GM23248 (cell line): ENCODE measurements at regions of chr16 and their contacts with region 1.

Region 1: DNA sequence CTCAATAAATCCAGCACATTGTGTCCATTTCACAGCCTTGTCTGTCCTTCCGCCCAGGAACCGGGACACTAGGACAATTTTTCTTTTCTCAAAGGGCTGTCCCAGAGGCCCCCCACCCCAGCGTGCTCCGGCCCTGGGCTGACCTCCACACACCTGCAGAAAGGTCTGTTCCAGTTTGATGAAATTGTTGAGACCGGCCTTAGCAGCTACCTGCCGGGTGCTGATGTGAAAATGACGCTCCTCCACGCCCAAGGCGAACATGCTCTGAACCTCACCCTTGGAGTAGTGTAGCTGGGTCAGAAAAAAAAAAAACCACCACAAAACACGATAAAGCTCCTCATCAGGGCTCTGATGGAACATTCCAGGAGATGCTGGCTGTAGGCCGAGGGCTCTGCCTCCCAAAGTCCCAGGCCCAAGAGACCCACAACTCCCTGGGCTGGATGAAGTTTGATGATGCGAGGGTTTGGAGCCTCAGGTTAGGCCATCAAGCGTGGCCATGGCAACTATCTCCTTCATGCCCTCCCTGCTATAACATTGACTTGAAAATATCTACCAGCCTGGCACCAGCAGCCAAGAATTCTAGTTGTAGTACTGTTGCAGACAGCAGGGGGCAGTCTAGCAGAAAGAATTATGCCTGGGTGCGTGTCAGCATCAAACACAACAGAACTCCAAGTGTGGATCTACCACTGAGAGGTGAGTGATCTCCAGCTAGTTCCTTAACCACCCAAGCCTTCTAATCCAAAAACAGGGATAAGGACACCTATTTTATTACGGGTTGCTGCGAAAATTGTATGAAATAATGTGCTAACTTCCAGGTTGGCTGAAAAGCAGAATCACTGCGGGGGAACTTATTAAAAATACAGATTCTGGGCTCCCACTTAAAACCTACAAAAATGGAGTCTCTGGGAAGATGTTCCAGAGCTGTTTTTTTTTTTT is 62.1 kb downstream of the RMI2 start:
- DNase-seq: peak; percentile 85
- H3K4me3 ChIP-seq: no peak overlapping the region
- H3K27ac ChIP-seq: no peak overlapping the region
- H3K4me1 ChIP-seq: peaks cover 16% of the 10 kb centered on the region
- H3K27me3 ChIP-seq: no peaks in the 10 kb centered on the region

Region 2: GRCh38 chr16:11658894-11659708 is 251.8 kb after region 1 on chr16:
- in situ Hi-C with region 1: loop called (anchors 10 kb)
- DNase-seq: no peak
- H3K4me3 ChIP-seq: no peak overlapping the region
- H3K27ac ChIP-seq: no peak overlapping the region
- H3K4me1 ChIP-seq: no peaks in the 10 kb centered on the region
- H3K27me3 ChIP-seq: no peaks in the 10 kb centered on the region

Region 3: DNA sequence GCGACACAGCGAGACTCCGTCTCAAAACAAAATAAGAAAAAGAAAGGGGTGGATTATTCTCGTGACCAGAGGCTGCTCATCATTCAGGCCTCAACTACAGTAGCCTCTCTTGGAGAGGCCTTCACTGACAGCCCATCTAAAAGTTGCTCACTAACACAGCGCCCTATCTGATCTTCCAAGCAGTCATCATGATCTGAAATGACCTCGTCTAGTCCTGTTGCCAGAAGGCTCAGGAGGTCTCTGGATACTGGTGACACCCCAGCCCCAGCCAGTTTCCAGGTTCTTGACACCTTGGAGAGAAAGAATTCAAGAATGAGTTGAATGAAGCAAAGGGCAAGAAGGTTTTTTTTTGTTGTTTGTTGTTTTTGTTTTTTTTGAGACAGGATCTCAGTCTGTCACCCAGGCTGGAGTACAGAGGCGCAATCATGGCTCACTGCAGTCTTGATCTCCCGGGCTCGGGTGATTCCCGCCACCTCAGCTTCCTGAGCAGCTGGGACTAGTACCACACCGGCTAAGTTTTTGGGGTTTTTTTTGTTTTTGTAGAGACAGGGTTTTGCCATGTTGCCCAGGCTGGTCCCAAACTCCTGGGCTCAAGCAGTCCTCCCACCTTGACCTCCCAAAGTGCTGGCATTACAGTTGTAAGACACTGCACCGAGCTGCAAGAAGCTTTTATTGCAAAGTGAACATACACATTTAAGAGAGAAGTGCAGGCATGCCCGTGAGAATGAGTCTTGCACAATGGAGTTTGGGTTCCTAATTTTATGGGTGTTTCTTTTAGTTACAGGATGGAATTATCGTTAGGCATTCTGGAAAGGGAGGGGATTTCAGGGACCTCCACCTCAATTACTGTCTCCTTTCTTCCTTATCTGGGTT is 392.4 kb after region 1 on chr16:
- in situ Hi-C with region 1: loop called (anchors 25 kb)
- DNase-seq: no peak
- H3K4me3 ChIP-seq: no peak overlapping the region
- H3K27ac ChIP-seq: no peak overlapping the region
- H3K4me1 ChIP-seq: peaks cover 46% of the 10 kb centered on the region
- H3K27me3 ChIP-seq: no peaks in the 10 kb centered on the region